HepG2 (cell line): ENCODE measurements at regions of chr2 and their contacts with region 1.

Region 1: GRCh38 chr2:26330113-26330549 is 15.8 kb upstream of the SELENOI start:
- DNase-seq: peak; percentile 74
- ATAC-seq: peak; percentile 97
- H3K4me3 ChIP-seq: no peak overlapping the region
- H3K27ac ChIP-seq: no peak overlapping the region
- H3K4me1 ChIP-seq: peaks cover 32% of the 10 kb centered on the region
- H3K27me3 ChIP-seq: no peaks in the 10 kb centered on the region; a peak in 1 of 5 replicates
- CTCF ChIP-seq: peak; percentile 92
- EP300 ChIP-seq: no peak
- POLR2A ChIP-seq: no peak
- RAD21 ChIP-seq: peak; percentile 82

Region 2: DNA sequence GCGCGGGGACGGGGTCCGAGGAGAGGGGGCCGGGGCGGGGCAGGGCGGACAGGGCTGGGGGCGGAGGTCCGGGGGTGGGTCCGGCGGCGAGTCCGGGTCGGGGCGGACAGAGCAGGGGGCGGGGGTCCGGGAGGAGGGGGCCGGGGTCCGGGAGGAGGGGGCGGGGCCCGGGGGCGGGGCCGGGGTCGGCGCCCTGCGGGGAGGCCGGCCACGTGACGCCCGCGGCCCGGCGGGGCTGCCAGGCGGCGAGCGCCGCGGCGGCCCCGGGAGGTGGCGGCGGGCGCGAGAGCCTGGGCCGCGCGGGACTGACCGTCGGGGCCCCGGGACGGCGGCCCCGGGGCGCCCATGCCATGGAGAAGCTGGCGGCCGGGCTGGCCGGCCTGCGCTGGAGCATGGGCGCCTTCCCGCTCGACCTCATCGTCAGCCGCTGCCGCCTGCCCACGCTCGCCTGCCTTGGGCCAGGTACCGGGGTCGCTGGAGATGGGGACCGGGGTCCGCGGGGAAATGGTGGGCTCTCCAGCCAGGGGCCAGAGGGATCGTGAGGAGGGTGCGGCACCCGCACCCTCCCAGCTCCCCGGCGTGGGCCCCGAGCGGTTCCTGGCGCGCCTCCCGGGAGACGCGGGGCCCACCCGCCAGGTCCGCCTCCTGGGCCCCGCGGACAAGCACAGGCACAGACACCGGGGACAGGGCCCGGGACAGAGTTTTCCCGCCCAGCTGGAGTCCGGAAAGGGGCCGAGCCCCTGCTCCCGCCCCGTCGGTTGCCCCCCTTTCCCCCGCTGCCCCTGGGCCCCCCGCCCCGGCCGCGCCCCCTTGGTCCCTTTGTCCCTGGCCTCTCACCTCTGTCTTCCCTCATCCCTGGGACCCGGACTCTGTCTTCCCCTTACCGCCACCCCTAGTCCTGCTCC is 157.0 kb before region 1 on chr2 and contains the start of gene GAREM2:
- CTCF ChIA-PET with region 1: no interaction called
- POLR2A ChIA-PET with region 1: no interaction called
- in situ Hi-C with region 1: no loop called
- intact Hi-C with region 1: loop called (anchors 5 kb)
- DNase-seq: no peak
- ATAC-seq: peak; percentile 16
- H3K4me3 ChIP-seq: peak within 1 kb of the TSS; percentile 49 to 76 (median 55)
- H3K27ac ChIP-seq: no peak within 1 kb of the TSS
- H3K4me1 ChIP-seq: peaks cover 20% of the 10 kb centered on the region
- H3K27me3 ChIP-seq: peaks cover 11 to 59% of the 10 kb centered on the region in 2 experiments
- CTCF ChIP-seq: no peak
- EP300 ChIP-seq: no peak
- POLR2A ChIP-seq: no peak
- RAD21 ChIP-seq: no peak
- total RNA-seq, gene GAREM2: 0.31 and 0.38 TPM in 2 replicates

Region 3: DNA sequence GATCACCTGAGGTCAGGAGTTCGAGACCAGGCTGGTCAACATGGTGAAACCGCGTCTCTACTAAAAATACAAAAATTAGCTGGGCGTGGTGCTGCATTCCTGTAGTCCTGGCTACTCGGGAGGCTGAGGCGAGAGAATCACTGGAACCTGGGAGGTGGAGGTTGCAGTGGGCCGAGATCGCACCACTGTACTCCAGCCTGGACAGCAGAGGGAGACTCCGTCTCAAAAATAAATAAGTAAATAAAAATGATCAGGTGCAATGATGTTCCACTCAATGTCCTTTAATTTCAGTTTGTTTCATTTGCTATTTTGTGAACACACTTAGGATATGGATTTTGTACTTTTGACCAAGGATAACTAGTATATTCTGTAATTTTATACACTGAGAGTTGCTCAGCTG is 95.0 kb before region 1 on chr2:
- CTCF ChIA-PET with region 1: interaction called, 10 read pairs
- POLR2A ChIA-PET with region 1: no interaction called
- in situ Hi-C with region 1: loop called (anchors 5 kb)
- intact Hi-C with region 1: loop called (anchors 1 kb)
- DNase-seq: peak; percentile 24
- ATAC-seq: peak; percentile 41; the same call in 1 of the 3 replicates
- H3K4me3 ChIP-seq: no peak overlapping the region
- H3K27ac ChIP-seq: no peak overlapping the region
- H3K4me1 ChIP-seq: peaks cover 25% of the 10 kb centered on the region
- H3K27me3 ChIP-seq: no peaks in the 10 kb centered on the region
- CTCF ChIP-seq: peak; percentile 58
- EP300 ChIP-seq: no peak
- POLR2A ChIP-seq: no peak
- RAD21 ChIP-seq: peak; percentile 65

Region 4: DNA sequence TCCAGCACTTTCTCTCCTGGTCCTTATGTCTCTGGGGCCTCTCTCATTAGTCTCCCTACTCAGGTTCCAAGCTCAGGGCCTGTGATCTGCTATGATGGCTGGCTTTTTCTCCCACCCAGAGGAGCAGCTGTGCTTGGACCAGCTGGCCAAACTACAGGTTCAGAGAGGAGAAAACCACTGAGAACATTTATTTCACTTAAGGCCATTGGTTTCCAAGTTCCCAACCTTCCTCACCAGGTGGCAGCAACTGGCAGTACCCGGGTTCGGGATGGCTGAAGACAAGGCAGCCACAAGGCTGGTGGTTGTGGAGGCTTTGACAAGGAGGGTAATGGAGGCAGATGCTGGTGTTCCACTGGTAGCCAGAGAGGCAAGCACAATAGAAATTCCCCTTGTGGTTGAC is 14.1 kb before region 1 on chr2:
- CTCF ChIA-PET with region 1: interaction called, 9 read pairs
- POLR2A ChIA-PET with region 1: no interaction called
- in situ Hi-C with region 1: no loop called
- intact Hi-C with region 1: loop called (anchors 2 kb)
- DNase-seq: peak; percentile 35
- ATAC-seq: peak; percentile 30; the same call in 2 of the 3 replicates
- H3K4me3 ChIP-seq: no peak overlapping the region
- H3K27ac ChIP-seq: no peak overlapping the region
- H3K4me1 ChIP-seq: no peaks in the 10 kb centered on the region
- H3K27me3 ChIP-seq: peaks cover 10 to 69% of the 10 kb centered on the region in 2 experiments; a peak in 4 of 5 replicates
- CTCF ChIP-seq: peak; percentile 66
- EP300 ChIP-seq: no peak
- POLR2A ChIP-seq: no peak
- RAD21 ChIP-seq: 0 out of 2 replicates have a peak, but pooled peaks have one; percentile 36

Region 5: DNA sequence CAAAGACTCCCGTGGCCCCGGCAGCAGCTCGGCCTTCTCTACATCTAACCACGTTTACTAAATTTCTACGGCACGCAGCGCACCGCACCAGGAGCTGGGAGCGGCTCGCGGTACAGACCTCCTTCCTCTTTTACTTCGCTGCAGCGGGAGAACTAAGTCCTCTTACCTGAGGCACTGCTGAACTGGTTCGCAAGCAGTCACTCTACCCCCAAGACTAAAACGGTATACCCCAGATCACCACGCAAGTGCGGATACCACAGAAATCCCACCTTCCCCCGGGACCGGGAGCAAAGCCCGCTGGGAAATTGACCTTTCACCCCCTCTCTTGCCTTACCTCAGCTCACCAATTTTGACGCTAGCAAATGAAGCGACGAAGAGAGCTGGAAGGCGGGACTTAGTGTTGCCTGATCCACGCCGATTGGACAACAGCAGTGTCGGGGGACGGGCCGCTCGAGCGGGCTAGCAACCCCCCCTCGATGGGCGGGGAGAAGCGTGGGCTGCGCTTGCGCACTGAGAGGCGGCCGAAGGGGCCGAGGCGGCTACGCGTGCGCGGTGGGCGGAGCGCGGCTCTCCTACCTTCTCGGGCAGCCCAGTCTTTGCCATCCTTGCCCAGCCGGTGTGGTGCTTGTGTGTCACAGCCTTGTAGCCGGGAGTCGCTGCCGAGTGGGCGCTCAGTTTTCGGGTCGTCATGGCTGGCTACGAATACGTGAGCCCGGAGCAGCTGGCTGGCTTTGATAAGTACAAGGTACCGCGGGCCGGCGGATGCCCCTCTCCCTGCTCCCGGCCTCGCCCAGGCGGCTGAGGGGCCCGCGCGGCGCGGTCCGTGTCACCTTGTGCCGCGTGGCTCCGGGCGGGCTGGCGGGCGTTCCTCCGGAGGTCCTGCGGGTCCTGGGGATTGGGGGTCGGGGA is 15.7 kb after region 1 on chr2 and contains the start of gene SELENOI:
- CTCF ChIA-PET with region 1: no interaction called
- POLR2A ChIA-PET with region 1: interaction called, 10 read pairs
- in situ Hi-C with region 1: no loop called
- intact Hi-C with region 1: no loop called
- DNase-seq: peak; percentile 100
- ATAC-seq: peak; percentile 95
- H3K4me3 ChIP-seq: peak within 1 kb of the TSS; percentile 89 to 96 (median 94)
- H3K27ac ChIP-seq: peak within 1 kb of the TSS; percentile 97
- H3K4me1 ChIP-seq: peaks cover 63% of the 10 kb centered on the region
- H3K27me3 ChIP-seq: no peaks in the 10 kb centered on the region; a peak in 1 of 5 replicates
- CTCF ChIP-seq: no peak; the same call in 1 of the 2 replicates
- EP300 ChIP-seq: peak; percentile 46 to 56; a peak in 3 of 4 replicates
- POLR2A ChIP-seq: peak; percentile 94 to 99
- RAD21 ChIP-seq: peak; percentile 33; the same call in 1 of the 2 replicates
- total RNA-seq, gene SELENOI: 60.3 and 66.0 TPM in 2 replicates

Region 6: GRCh38 chr2:26456440-26457250 is 126.5 kb after region 1 on chr2:
- CTCF ChIA-PET with region 1: no interaction called
- POLR2A ChIA-PET with region 1: no interaction called
- in situ Hi-C with region 1: no loop called
- intact Hi-C with region 1: loop called (anchors 5 kb)
- DNase-seq: peak; percentile 82
- ATAC-seq: peak; percentile 85
- H3K4me3 ChIP-seq: peak overlapping the region; percentile 46 to 76 (median 50)
- H3K27ac ChIP-seq: peak overlapping the region; percentile 69
- H3K4me1 ChIP-seq: peaks cover 43% of the 10 kb centered on the region
- H3K27me3 ChIP-seq: no peaks in the 10 kb centered on the region; a peak in 1 of 5 replicates
- CTCF ChIP-seq: 0 out of 2 replicates have a peak, but pooled peaks have one; percentile 2
- EP300 ChIP-seq: peak; percentile 49 to 67; a peak in 2 of 4 replicates
- POLR2A ChIP-seq: peak in 1 of 2 experiments; percentile 29; a peak in 1 of 4 replicates
- RAD21 ChIP-seq: no peak